Ascending aorta (tissue), 2 donors: ENCODE measurements at regions of chr5 and their contacts with region 1.

Region 1: GRCh38 chr5:59485629-59486439 is 407.7 kb downstream of the PDE4D start:
- DNase-seq: no peak
- H3K4me3 ChIP-seq: no peak overlapping the region
- H3K27ac ChIP-seq: no peak overlapping the region
- H3K4me1 ChIP-seq: no peaks in the 10 kb centered on the region
- H3K27me3 ChIP-seq: no peaks in the 10 kb centered on the region
- CTCF ChIP-seq: no peak

Region 2: GRCh38 chr5:58335518-58335917 is 1150.3 kb before region 1 on chr5:
- intact Hi-C with region 1: no loop called
- DNase-seq: no peak
- H3K4me3 ChIP-seq: no peak overlapping the region
- H3K27ac ChIP-seq: no peak overlapping the region
- H3K4me1 ChIP-seq: no peaks in the 10 kb centered on the region
- H3K27me3 ChIP-seq: no peaks in the 10 kb centered on the region
- CTCF ChIP-seq: no peak

Region 3: GRCh38 chr5:58925627-58926540 is 560.0 kb before region 1 on chr5:
- intact Hi-C with region 1: no loop called
- DNase-seq: peak in 1 of 2 donors; percentile 68
- H3K4me3 ChIP-seq: peak overlapping the region in 1 of 2 donors; percentile 25
- H3K27ac ChIP-seq: peak overlapping the region; percentile 94 to 97
- H3K4me1 ChIP-seq: peaks cover 15 to 50% of the 10 kb centered on the region in 2 donors
- H3K27me3 ChIP-seq: no peaks in the 10 kb centered on the region
- CTCF ChIP-seq: no peak

Region 4: GRCh38 chr5:59115345-59115744 is 370.5 kb before region 1 on chr5:
- intact Hi-C with region 1: no loop called
- DNase-seq: no peak
- H3K4me3 ChIP-seq: no peak overlapping the region
- H3K27ac ChIP-seq: no peak overlapping the region
- H3K4me1 ChIP-seq: no peaks in the 10 kb centered on the region
- H3K27me3 ChIP-seq: no peaks in the 10 kb centered on the region
- CTCF ChIP-seq: no peak

Region 5: DNA sequence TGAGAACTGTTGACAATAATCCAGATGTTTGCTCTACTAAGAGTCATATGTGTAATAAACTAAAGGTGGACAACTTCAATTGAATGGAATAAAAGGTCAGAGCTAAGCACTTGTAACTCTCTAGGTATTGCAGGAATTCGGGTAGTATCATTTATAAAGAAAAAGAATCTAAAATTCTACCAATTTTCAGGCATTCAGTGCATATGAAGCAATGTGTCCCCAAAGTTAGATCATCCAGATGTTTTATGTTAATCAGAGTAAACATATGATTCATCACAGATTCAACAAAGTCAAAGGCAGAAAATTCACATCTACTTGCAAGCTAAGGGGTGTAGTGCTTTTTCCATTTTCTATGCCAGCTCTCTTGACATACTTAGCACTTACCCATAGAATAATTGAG is 69.4 kb before region 1 on chr5:
- intact Hi-C with region 1: loop called (anchors 2 kb)
- DNase-seq: no peak
- H3K4me3 ChIP-seq: no peak overlapping the region
- H3K27ac ChIP-seq: no peak overlapping the region
- H3K4me1 ChIP-seq: no peaks in the 10 kb centered on the region
- H3K27me3 ChIP-seq: no peaks in the 10 kb centered on the region
- CTCF ChIP-seq: no peak

Region 6: GRCh38 chr5:59466271-59466670 is 19.6 kb before region 1 on chr5:
- intact Hi-C with region 1: no loop called
- DNase-seq: no peak
- H3K4me3 ChIP-seq: no peak overlapping the region
- H3K27ac ChIP-seq: no peak overlapping the region
- H3K4me1 ChIP-seq: no peaks in the 10 kb centered on the region
- H3K27me3 ChIP-seq: no peaks in the 10 kb centered on the region
- CTCF ChIP-seq: no peak